ENCODE measurements at regions of chr2 and their contacts with region 1.

Region 1: DNA sequence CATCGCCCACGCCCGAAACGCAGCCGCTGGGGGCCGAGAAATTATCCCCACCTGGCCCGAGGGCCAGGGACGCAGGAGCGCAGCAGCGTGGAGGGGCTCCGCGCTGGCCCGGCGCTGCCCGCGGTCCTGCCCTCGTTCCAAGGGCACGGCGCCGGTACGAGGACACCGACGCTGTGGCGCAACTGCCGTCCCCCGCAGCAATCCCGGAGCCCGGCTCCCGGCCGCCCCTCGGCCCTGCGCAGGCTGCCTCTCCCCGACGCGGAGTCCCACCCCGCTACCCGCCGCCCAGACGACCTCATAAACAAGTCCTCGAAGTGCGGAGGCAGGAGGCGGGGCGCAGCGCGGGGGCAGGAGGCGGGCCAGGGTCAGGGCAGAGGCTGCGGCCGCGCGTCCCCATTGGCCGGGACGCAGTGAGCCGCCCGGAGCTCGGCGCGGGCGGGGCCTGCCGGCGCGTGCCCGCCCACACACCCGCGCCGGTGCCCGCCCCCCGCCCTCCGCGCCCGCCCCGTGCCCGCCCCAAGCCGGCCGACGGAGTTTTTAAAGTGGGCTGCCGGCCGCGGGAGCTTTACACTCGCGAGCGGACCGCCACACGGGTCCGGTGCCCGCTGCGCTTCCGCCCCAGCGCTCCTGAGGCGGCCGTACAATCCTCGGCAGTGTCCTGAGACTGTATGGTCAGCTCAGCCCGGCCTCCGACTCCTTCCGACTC is at the start of gene EPAS1:
- DNase-seq: peak; percentile 80
- H3K4me3 ChIP-seq: peak within 1 kb of the TSS; percentile 62 to 96 (median 89)
- H3K27ac ChIP-seq: peak within 1 kb of the TSS; percentile 51
- H3K4me1 ChIP-seq: peaks cover 20% of the 10 kb centered on the region
- H3K27me3 ChIP-seq: no peaks in the 10 kb centered on the region
- CTCF ChIP-seq: no peak
- total RNA-seq, gene EPAS1: 130 to 174 TPM

Region 2: DNA sequence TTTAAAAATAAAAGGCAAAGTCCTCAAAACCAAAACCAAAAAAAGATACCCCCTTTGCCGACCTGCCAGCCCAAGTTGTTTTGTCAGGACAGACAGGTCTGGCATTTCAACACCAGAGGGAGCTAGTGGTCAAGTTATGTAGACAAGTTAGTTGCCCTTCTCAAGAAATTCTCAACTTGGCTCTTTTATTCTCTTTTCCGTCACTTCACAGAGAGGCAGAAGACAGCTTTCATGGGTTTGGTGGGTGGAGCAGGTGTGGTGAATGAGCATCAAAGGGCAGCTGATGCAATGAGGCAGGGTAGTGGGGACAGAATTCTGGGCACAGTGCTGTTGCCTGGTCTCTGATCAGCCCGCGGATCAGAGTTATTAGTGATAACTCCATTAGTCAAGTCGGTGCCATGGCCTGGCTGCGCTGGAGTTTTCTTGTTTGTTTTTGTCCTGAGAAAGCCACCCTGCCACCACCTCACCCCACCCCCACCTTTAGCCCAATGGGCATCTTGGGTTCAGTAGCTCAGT is 303.5 kb before region 1 on chr2:
- CTCF ChIA-PET with region 1: no interaction called
- dilution Hi-C with region 1: no loop called
- in situ Hi-C with region 1: no loop called
- intact Hi-C with region 1: loop called (anchors 1 kb)
- DNase-seq: peak; percentile 58
- H3K4me3 ChIP-seq: no peak overlapping the region
- H3K27ac ChIP-seq: no peak overlapping the region
- H3K4me1 ChIP-seq: peaks cover 19% of the 10 kb centered on the region
- H3K27me3 ChIP-seq: no peaks in the 10 kb centered on the region
- CTCF ChIP-seq: peak; percentile 78 to 79

Region 3: DNA sequence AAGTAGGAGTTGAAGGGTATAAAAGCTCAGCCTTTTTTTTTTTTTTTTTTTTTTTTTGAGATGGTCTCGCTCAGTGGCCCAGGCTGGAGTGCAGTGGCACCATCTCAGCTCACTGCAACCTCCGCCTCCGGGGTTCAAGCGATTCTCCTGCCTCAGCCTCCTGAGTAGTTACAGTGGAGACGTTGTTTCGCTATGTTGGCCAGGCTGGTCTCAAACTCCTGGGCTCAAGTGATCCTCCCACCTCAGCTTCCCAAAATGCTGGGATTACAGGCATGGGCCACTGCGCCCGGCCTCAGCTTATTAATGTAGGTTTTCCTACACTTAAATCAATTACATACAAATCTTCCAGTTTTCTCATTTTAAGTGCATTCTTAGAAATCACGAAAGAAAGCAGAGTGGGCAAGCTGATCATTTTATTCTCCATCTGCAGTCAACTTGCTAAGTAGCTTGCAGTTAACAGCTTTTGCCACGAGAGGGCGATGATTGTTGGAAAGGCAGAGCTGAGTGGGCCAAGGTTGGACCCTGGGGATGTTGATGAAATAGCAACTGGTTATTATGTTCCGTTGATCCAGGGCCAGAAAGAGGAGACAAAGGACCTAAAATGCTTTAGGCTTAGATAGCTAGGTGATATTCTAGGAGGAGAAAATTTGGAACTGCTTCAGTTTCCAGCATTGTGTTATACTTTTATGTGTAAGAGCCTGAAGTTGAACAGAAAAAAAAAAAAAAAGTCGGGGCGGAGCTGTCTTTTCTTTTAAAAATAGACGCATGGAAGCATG is 234.2 kb before region 1 on chr2:
- CTCF ChIA-PET with region 1: interaction called, 16 read pairs
- dilution Hi-C with region 1: no loop called
- in situ Hi-C with region 1: loop called in 1 of 2 experiments (anchors 10 kb)
- intact Hi-C with region 1: loop called (anchors 1 kb)
- DNase-seq: peak; percentile 53
- H3K4me3 ChIP-seq: no peak overlapping the region
- H3K27ac ChIP-seq: no peak overlapping the region
- H3K4me1 ChIP-seq: peaks cover 4% of the 10 kb centered on the region
- H3K27me3 ChIP-seq: no peaks in the 10 kb centered on the region
- CTCF ChIP-seq: peak; percentile 85 to 92

Region 4: GRCh38 chr2:46315103-46315890 is 18.3 kb after region 1 on chr2:
- CTCF ChIA-PET with region 1: no interaction called
- dilution Hi-C with region 1: no loop called
- in situ Hi-C with region 1: no loop called
- intact Hi-C with region 1: loop called (anchors 1 kb)
- DNase-seq: peak; percentile 98
- H3K4me3 ChIP-seq: no peak overlapping the region
- H3K27ac ChIP-seq: peak overlapping the region; percentile 61
- H3K4me1 ChIP-seq: peaks cover 74% of the 10 kb centered on the region
- H3K27me3 ChIP-seq: no peaks in the 10 kb centered on the region
- CTCF ChIP-seq: no peak

Region 5: DNA sequence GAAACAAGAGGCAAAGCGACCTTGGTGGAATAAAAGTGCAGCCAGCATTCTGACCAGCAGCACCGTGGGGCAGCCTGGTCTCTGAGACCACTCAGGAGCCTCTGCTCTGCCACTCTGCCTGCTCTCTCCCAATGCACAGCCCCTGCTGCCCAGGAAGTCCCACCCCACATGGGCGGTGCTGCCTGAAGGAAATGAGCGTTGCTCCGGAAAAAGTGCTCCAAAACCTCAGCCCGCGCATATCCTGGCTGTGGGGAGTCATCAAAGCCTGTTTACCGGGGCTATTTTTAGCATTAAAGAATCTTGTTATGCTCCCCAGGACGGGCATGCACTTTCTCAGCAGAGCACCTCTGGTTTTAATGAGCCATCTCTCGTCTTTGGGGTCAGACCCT is 54.8 kb after region 1 on chr2:
- CTCF ChIA-PET with region 1: no interaction called
- dilution Hi-C with region 1: no loop called
- in situ Hi-C with region 1: loop called in 1 of 2 experiments (anchors 10 kb)
- intact Hi-C with region 1: no loop called
- DNase-seq: no peak
- H3K4me3 ChIP-seq: no peak overlapping the region
- H3K27ac ChIP-seq: no peak overlapping the region
- H3K4me1 ChIP-seq: no peaks in the 10 kb centered on the region
- H3K27me3 ChIP-seq: no peaks in the 10 kb centered on the region
- CTCF ChIP-seq: no peak